Activated CD4-positive, alpha-beta memory T cell treated with anti-CD3 and anti-CD28 coated beads for 36 hours (primary cell): ENCODE measurements at regions of chr2 and their contacts with region 1.

Region 1: GRCh38 chr2:230658877-230659652 is 53.6 kb upstream of the CAB39 start:
- DNase-seq: peak; percentile 90
- H3K4me3 Mint-ChIP-seq: peak overlapping the region; percentile 88
- H3K27ac Mint-ChIP-seq: peak overlapping the region; percentile 99
- H3K4me1 Mint-ChIP-seq: peaks cover 88% of the 10 kb centered on the region
- H3K27me3 Mint-ChIP-seq: no peaks in the 10 kb centered on the region

Region 2: GRCh38 chr2:230202430-230203109 is 456.5 kb before region 1 on chr2:
- CTCF ChIA-PET with region 1: no interaction called
- POLR2A ChIA-PET with region 1: no interaction called
- intact Hi-C with region 1: loop called (anchors 2 kb)
- DNase-seq: peak; percentile 75
- H3K4me3 Mint-ChIP-seq: peak overlapping the region; percentile 10
- H3K27ac Mint-ChIP-seq: peak overlapping the region; percentile 80
- H3K4me1 Mint-ChIP-seq: peaks cover 35% of the 10 kb centered on the region
- H3K27me3 Mint-ChIP-seq: no peaks in the 10 kb centered on the region

Region 3: DNA sequence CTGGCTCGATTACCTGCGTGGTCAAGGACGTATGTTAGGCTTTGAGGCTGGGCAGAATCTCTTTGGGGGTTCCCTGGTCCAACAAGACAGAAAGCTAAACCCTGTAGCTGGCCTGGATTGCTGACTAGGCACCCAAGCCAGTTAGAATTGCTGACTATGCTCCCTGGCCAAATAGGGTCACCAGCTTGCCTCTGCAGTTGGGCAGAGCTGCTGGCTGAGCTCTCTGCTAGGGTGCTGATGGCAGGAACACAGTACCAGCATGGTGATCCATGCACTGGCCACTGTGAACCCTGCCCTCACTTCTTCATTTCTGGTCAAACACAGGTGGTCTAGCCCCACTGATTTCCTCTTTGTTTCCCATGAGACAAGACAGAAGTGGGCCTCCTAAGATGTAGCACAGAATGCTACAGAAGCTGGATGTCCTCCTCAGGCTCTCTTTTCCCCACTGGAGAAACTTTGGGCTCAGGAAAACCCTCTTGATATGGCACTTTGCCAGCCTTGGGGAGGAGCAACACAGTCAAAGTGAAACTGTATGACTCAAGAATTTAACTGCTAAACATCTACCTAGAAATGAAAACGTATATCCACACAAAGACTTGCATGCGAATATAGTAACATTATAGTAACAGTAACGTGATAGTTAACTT is 311.3 kb before region 1 on chr2:
- CTCF ChIA-PET with region 1: no interaction called
- POLR2A ChIA-PET with region 1: no interaction called
- intact Hi-C with region 1: loop called (anchors 5 kb)
- DNase-seq: peak; percentile 70
- H3K4me3 Mint-ChIP-seq: peak overlapping the region; percentile 47
- H3K27ac Mint-ChIP-seq: peak overlapping the region; percentile 92
- H3K4me1 Mint-ChIP-seq: peaks cover 80% of the 10 kb centered on the region
- H3K27me3 Mint-ChIP-seq: no peaks in the 10 kb centered on the region

Region 4: GRCh38 chr2:230602562-230603230 is 56.4 kb before region 1 on chr2:
- CTCF ChIA-PET with region 1: no interaction called
- POLR2A ChIA-PET with region 1: no interaction called
- intact Hi-C with region 1: loop called (anchors 2 kb)
- DNase-seq: peak; percentile 75
- H3K4me3 Mint-ChIP-seq: peak overlapping the region; percentile 31
- H3K27ac Mint-ChIP-seq: peak overlapping the region; percentile 89
- H3K4me1 Mint-ChIP-seq: peaks cover 56% of the 10 kb centered on the region
- H3K27me3 Mint-ChIP-seq: no peaks in the 10 kb centered on the region

Region 5: DNA sequence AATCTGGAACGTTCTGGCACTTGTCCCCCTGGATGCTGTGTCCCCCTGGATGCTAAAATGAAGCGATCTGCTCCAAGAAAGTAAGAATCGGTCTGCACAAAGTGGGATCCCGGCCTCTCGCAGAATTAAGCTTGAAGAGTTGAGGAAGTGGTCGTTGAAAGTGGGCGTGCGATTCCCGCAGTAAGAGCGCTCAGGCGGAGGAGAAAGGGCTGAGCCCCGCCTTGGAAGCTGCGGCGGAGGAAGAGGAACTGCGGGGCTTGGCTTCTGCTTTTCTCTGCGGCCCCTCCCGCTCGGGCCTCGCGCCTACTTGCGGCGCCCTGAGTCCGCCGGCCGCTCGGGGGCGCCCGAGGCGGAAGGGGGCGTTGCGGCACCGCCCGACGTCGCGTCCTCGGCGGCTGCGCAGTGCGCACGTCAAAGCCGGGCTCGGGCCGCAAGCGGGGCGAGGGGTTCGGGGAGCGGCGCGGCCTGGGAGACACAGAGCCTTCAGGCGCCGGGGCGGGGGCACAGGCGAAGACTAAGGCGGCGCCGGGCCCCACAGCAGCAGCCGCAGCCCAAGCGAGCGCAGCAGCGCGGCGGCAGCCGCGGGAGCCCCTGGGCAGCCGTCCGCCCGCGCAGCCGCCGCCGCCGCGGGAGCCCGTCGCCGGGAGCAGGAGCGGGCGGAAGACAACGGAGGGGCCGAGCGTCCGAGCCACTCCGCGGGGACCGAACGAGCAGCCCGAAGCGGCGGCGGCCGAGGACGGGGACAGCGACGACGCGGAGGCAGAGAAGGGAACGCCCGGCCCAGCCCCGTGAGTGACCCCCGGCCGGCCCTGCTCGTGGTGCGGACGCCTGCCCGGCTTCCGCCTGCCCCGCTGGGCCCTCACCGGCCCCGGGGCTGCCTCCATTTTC is 53.6 kb after region 1 on chr2 and contains the start of gene CAB39:
- CTCF ChIA-PET with region 1: interaction called, 8 read pairs
- POLR2A ChIA-PET with region 1: interaction called, 67 read pairs
- intact Hi-C with region 1: loop called (anchors 1 kb)
- DNase-seq: peak; percentile 91
- H3K4me3 Mint-ChIP-seq: peak within 1 kb of the TSS; percentile 93
- H3K27ac Mint-ChIP-seq: peak within 1 kb of the TSS; percentile 91
- H3K4me1 Mint-ChIP-seq: peaks cover 41% of the 10 kb centered on the region
- H3K27me3 Mint-ChIP-seq: no peaks in the 10 kb centered on the region
- total RNA-seq, gene CAB39: 128 to 129 TPM

Region 6: DNA sequence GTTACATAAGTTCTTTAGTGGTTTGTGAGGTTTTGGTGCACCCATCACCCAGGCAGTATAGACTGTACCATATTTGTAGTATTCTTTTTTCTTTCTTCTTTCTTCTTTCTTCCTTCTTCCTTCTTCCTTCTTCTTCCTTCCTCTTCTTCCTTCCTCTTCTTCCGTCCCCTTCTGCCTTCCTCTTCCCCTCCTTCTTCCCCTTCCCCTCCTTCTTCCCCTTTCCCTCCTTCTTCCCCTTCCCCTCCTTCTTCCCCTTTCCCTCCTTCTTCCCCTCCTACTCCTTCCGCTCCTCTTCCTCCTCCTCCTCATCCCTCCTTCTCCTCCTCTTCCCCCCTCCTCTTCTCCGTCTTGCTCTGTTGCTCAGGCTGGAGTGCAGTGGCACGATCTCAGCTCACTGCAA is 95.1 kb after region 1 on chr2:
- CTCF ChIA-PET with region 1: no interaction called
- POLR2A ChIA-PET with region 1: no interaction called
- intact Hi-C with region 1: no loop called
- DNase-seq: no peak
- H3K4me3 Mint-ChIP-seq: no peak overlapping the region
- H3K27ac Mint-ChIP-seq: no peak overlapping the region
- H3K4me1 Mint-ChIP-seq: peaks cover 79% of the 10 kb centered on the region
- H3K27me3 Mint-ChIP-seq: no peaks in the 10 kb centered on the region

Region 7: DNA sequence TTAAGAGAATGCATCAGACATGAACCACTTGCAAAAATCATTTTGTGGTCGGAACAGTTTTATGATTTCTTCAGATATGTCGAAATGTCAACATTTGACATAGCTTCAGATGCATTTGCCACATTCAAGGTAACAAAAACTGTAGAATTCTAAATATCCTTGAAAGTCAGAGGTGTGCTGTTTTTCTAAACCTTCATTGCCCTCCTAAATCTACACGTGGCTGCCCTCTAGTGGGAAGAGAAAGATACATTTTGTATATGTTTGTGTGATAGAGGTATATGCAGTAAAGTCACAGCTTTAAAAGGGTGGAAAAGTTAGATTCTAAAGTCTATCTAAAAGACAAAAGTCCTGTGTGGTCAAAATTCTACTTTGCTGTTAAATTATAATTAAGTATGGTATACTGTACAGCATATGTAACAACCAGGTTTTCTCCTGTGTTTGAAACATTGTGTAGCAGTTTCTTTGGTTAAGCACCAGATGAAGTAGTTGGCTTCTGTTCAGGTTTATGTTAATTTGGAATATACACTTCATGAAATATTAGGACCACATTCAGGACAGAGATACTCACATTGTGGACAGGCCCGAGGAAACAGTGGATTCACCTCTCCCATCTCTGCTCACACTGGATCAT is 139.8 kb after region 1 on chr2:
- CTCF ChIA-PET with region 1: interaction called, 29 read pairs
- POLR2A ChIA-PET with region 1: interaction called, 10 read pairs
- intact Hi-C with region 1: loop called (anchors 1 kb)
- DNase-seq: peak; percentile 36
- H3K4me3 Mint-ChIP-seq: no peak overlapping the region
- H3K27ac Mint-ChIP-seq: peak overlapping the region; percentile 64
- H3K4me1 Mint-ChIP-seq: peaks cover 16% of the 10 kb centered on the region
- H3K27me3 Mint-ChIP-seq: no peaks in the 10 kb centered on the region